Left colon (tissue), 2 donors: ENCODE measurements at regions of chr5 and their contacts with region 1.

Region 1: GRCh38 chr5:141960449-141961202 is 2.6 kb upstream of the PCDH12 start:
- DNase-seq: peak; percentile 83 to 93
- ATAC-seq: peak; percentile 93

Region 2: DNA sequence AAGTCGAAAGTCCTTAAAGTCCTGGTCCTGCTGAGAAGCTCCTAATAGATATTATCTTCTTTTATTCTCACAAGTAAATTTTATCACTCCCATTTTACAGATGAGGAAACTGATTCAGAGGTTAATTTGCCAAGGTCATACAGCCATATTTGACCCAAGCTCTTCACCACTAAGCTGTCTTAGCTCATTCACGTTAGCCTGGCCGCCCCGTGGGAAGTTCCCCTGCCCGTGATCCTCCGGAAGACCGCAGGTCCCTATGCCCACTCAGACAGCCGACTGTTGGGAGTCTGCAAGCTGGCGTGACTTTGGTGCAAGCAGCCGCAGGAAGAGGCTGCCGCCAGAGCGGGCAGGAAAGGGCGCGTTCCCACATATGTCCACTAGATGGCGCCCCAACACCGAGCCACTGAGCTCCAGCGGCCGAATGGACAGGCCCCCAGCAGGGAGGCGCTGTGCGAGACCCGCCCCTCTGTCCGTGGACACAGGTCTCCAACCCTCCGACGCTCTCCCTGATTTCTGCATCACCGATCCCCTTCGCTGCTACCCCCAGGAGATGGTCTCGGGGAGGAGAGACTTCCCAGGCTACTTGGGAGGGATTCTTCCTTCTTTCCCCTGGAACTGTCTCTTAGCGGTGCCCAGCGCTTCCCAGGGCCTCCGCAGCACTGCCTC is 268.6 kb before region 1 on chr5:
- intact Hi-C with region 1: loop called (anchors 5 to 10 kb)
- DNase-seq: peak; percentile 77 to 90
- ATAC-seq: peak; percentile 87